ENCODE measurements at regions of chr1 and their contacts with region 1.

Region 1: GRCh38 chr1:154558575-154559465 is at the start of gene UBE2Q1:
- DNase-seq: peak; percentile 99 to 100 (median 100)
- ATAC-seq: peak; percentile 97 to 98
- H3K4me3 ChIP-seq: peak within 1 kb of the TSS; percentile 97
- H3K27ac ChIP-seq: peak within 1 kb of the TSS; percentile 94
- H3K4me1 ChIP-seq: peaks cover 9% of the 10 kb centered on the region
- H3K27me3 ChIP-seq: no peaks in the 10 kb centered on the region
- total RNA-seq, gene UBE2Q1: 49.4 to 67.9 (median 61.3) TPM

Region 2: DNA sequence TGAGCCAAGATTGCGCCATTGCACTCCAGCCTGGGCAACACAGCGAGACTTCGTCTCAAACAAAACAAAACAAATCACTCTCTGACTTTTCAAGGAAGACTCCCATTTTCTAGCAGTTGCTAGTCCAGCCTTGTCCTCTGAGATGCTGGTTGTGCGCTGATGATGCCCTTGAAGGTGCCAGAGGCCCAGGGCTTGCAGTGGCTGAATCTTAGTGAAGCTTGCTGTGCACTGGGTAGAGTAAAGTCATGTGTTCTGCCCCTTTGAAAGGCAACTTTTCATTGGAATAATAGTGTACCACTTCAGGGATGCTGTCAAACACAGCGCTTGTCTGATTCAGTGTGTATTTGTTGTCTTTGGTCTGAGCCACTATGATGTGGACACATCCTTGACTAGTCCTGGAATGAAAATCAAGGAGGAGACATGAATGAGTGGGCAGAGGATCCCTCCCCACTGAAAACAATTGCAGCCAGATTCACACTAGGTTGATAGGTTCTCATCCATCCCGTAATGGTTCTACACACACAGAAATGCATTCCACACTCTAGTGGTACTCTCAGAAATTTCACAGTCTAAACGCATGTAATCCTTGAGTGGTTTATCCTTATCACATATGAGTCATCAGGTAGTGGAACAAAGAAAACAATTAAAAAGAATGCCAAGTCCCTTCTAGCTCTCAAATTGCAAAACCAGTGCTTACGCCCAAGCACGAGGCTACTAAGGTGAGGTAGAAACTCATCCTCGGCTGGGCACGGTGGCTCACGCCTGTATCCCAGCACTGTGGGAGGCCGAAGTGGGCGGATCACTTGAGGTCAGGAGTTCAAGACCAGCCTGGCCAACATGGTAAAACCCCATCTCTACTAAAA is 74.6 kb before region 1 on chr1:
- intact Hi-C with region 1: no loop called
- DNase-seq: no peak
- ATAC-seq: peak; percentile 48 to 83
- H3K4me3 ChIP-seq: no peak overlapping the region
- H3K27ac ChIP-seq: peak overlapping the region; percentile 77
- H3K4me1 ChIP-seq: peaks cover 3% of the 10 kb centered on the region
- H3K27me3 ChIP-seq: no peaks in the 10 kb centered on the region

Region 3: GRCh38 chr1:154751690-154752089 is 192.9 kb after region 1 on chr1:
- intact Hi-C with region 1: loop called in 1 of 4 experiments (anchors 10 kb)
- DNase-seq: no peak
- ATAC-seq: peak; percentile 47 to 54
- H3K4me3 ChIP-seq: no peak overlapping the region
- H3K27ac ChIP-seq: no peak overlapping the region
- H3K4me1 ChIP-seq: no peaks in the 10 kb centered on the region
- H3K27me3 ChIP-seq: no peaks in the 10 kb centered on the region

Region 4: GRCh38 chr1:154870115-154870571 is 311.3 kb after region 1 on chr1 and contains the start of gene KCNN3:
- intact Hi-C with region 1: loop called (anchors 5 to 10 kb)
- DNase-seq: peak; percentile 93 to 98 (median 97)
- ATAC-seq: peak; percentile 98
- H3K4me3 ChIP-seq: peak within 1 kb of the TSS; percentile 27
- H3K27ac ChIP-seq: no peak within 1 kb of the TSS
- H3K4me1 ChIP-seq: no peaks in the 10 kb centered on the region
- H3K27me3 ChIP-seq: no peaks in the 10 kb centered on the region
- total RNA-seq, gene KCNN3: 2.4 to 3.8 (median 3.4) TPM

Region 5: GRCh38 chr1:154878371-154879022 is 319.7 kb after region 1 on chr1:
- intact Hi-C with region 1: loop called (anchors 5 to 10 kb)
- DNase-seq: peak; percentile 80 to 92 (median 92)
- ATAC-seq: peak; percentile 91
- H3K4me3 ChIP-seq: no peak overlapping the region
- H3K27ac ChIP-seq: no peak overlapping the region
- H3K4me1 ChIP-seq: peaks cover 3% of the 10 kb centered on the region
- H3K27me3 ChIP-seq: no peaks in the 10 kb centered on the region

Region 6: GRCh38 chr1:155070721-155071569 is 512.1 kb after region 1 on chr1:
- intact Hi-C with region 1: loop called in 1 of 4 experiments (anchors 10 kb)
- DNase-seq: peak; percentile 83 to 94 (median 90)
- ATAC-seq: peak; percentile 79 to 87
- H3K4me3 ChIP-seq: peak overlapping the region; percentile 41
- H3K27ac ChIP-seq: no peak overlapping the region
- H3K4me1 ChIP-seq: peaks cover 4% of the 10 kb centered on the region
- H3K27me3 ChIP-seq: no peaks in the 10 kb centered on the region